Naive thymus-derived CD4-positive, alpha-beta T cell (primary cell): ENCODE measurements at regions of chr13 and their contacts with region 1.

Region 1: GRCh38 chr13:24160454-24161009 is at the start of gene SPATA13:
- DNase-seq: peak; percentile 84 to 95 (median 93)
- ATAC-seq: peak; percentile 99
- H3K4me3 ChIP-seq: peak within 1 kb of the TSS; percentile 80
- H3K4me3 Mint-ChIP-seq: peak within 1 kb of the TSS; percentile 79 to 94 (median 88)
- H3K27ac ChIP-seq: peak within 1 kb of the TSS; percentile 62
- H3K27ac Mint-ChIP-seq: peak within 1 kb of the TSS in 8 of 9 donors; percentile 24 to 82 (median 65)
- H3K4me1 ChIP-seq: peaks cover 3 to 9% of the 10 kb centered on the region in 2 donors
- H3K4me1 Mint-ChIP-seq: peaks cover 9 to 19% (median 13%) of the 10 kb centered on the region in 7 donors
- H3K27me3 ChIP-seq: no peaks in the 10 kb centered on the region
- H3K27me3 Mint-ChIP-seq: peaks cover 5 to 23% (median 9%) of the 10 kb centered on the region in 5 donors
- total RNA-seq, gene SPATA13: 62.2 to 104 (median 101) TPM

Region 2: DNA sequence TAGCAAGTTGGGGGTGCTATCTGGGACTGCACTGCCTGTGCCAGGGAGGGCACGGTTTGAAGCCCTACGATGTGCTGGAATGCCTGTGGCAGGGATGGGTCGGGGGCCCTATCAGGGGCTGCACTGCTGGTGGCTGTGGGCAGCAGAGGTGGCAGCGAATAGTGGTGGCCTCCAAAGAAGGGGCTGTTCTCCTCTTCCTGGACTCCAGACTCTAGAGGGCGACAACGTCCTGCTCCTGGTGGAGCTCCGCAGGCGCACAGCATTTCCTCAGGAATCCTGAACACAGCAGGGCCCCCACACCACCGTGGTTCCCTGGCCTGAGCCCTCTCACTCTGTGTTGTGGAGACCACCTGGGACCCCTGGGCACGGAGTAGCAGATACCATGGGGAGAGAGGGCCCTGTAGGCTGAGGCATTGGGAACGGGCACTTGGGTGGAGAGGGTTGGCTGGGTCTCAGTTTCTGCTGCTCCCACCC is 444.7 kb before region 1 on chr13:
- CTCF ChIA-PET with region 1: no interaction called
- POLR2A ChIA-PET with region 1: no interaction called
- intact Hi-C with region 1: no loop called
- DNase-seq: no peak
- ATAC-seq: no peak
- H3K4me3 ChIP-seq: no peak overlapping the region
- H3K4me3 Mint-ChIP-seq: no peak overlapping the region
- H3K27ac ChIP-seq: no peak overlapping the region
- H3K27ac Mint-ChIP-seq: no peak overlapping the region
- H3K4me1 ChIP-seq: no peaks in the 10 kb centered on the region
- H3K4me1 Mint-ChIP-seq: peaks cover 14 to 38% (median 32%) of the 10 kb centered on the region in 7 donors
- H3K27me3 ChIP-seq: no peaks in the 10 kb centered on the region
- H3K27me3 Mint-ChIP-seq: peaks cover 0 to 18% (median 11%) of the 10 kb centered on the region in 5 donors

Region 3: DNA sequence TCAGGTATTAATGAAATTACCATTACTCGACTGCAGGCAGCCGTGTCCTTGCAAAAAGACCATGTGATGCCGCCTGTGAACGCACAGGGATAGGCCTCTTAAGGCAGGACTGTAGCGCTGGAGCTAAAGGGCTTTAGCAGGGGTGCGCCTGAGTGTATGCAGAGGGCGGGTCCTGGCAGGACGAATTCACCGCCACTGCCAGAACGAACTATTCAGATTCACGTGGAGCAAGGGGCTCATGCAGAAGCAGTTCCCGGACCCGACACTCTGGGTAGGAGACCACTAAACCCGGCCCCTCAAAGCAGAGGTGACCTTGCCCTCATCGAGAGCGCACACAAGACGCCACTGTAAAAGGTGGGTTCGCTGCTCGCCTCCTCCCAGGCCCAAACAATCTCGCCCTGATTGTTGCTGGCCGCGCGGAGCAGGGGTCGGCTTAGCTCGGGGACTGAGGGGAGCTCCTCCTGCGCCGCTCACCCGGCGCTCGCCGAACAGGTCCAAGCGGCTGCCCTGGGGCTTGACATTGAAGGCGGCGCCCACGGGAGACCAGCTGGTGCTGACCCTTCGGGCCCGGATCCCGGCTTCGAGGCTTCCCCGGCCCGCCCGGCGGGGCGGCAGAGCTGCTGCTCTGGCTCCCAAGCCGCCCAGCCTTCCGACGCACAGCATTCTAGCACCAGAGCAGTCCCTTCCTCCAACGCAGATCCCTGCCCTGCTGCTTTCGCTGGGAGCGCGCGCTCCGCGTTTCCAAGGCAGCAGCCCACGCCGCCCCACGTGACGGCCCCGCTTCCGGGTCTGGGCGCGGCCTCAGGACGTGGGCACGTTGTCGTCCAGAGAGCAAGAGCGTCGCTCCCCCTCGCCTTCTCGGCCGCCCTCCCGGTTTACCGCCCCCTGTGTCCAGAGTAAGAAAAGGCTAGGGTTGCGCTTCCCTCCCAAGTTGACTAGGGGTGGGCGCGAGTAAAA is 271.6 kb before region 1 on chr13 and contains the start of gene MIPEP:
- CTCF ChIA-PET with region 1: no interaction called
- POLR2A ChIA-PET with region 1: no interaction called
- intact Hi-C with region 1: loop called (anchors 1 to 2 kb)
- DNase-seq: peak; percentile 68 to 94 (median 83)
- ATAC-seq: peak; percentile 98
- H3K4me3 ChIP-seq: peak within 1 kb of the TSS; percentile 88
- H3K4me3 Mint-ChIP-seq: peak within 1 kb of the TSS; percentile 85 to 96 (median 92)
- H3K27ac ChIP-seq: peak within 1 kb of the TSS; percentile 70
- H3K27ac Mint-ChIP-seq: peak within 1 kb of the TSS; percentile 72 to 92 (median 84)
- H3K4me1 ChIP-seq: peaks cover 0 to 5% of the 10 kb centered on the region in 2 donors
- H3K4me1 Mint-ChIP-seq: peaks cover 12 to 31% (median 25%) of the 10 kb centered on the region in 7 donors
- H3K27me3 ChIP-seq: no peaks in the 10 kb centered on the region
- H3K27me3 Mint-ChIP-seq: no peaks in the 10 kb centered on the region
- total RNA-seq, gene MIPEP: 8.0 to 10.5 (median 9.2) TPM

Region 4: GRCh38 chr13:23902975-23903905 is 257.3 kb before region 1 on chr13:
- CTCF ChIA-PET with region 1: no interaction called
- POLR2A ChIA-PET with region 1: no interaction called
- intact Hi-C with region 1: no loop called
- DNase-seq: no peak
- ATAC-seq: peak; percentile 18
- H3K4me3 ChIP-seq: no peak overlapping the region
- H3K4me3 Mint-ChIP-seq: peak overlapping the region in 7 of 10 donors; percentile 8 to 56 (median 36)
- H3K27ac ChIP-seq: no peak overlapping the region
- H3K27ac Mint-ChIP-seq: no peak overlapping the region
- H3K4me1 ChIP-seq: no peaks in the 10 kb centered on the region
- H3K4me1 Mint-ChIP-seq: peaks cover 0 to 10% (median 3%) of the 10 kb centered on the region in 7 donors
- H3K27me3 ChIP-seq: peaks cover 0 to 10% of the 10 kb centered on the region in 2 donors
- H3K27me3 Mint-ChIP-seq: peaks cover 41 to 59% (median 42%) of the 10 kb centered on the region in 5 donors

Region 5: DNA sequence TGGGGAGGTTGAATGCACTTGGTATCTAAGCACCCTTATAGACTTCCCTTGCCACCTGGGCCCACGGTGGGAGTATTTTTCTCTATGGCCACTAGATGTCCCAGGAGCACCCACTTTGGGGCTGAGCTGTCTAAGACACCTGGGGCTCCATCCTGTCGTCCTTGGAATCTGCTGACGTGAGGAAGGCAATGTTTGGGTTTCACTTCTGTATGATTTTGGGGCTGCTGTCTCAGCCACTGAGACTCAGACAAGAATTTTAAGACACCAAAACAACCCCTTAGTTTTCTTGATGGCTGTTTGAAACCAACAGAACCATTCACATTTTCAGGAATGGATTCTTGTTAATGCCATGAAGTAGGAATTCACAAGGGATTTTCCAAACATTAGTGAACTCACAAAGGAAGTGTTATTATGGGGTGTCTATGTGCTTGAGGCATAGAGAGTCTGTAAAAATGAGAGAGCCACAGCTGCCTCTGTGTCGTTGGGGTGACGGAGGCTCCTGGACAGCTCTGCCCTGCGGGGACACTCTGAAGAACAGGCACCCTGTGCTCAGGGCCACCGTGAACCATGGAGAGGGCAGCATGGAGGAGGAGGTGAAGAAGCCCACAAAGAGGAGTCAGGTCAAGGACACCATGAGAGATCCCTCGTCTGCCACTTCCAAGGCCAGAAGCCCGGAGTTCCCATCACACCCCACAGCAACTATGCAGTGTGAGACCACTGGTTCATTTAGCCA is 106.8 kb before region 1 on chr13:
- CTCF ChIA-PET with region 1: no interaction called
- POLR2A ChIA-PET with region 1: no interaction called
- intact Hi-C with region 1: loop called (anchors 1 to 2 kb)
- DNase-seq: peak; percentile 24 to 70 (median 61)
- ATAC-seq: peak; percentile 91
- H3K4me3 ChIP-seq: no peak overlapping the region
- H3K4me3 Mint-ChIP-seq: no peak overlapping the region
- H3K27ac ChIP-seq: no peak overlapping the region
- H3K27ac Mint-ChIP-seq: peak overlapping the region in 5 of 9 donors; percentile 21 to 68 (median 24)
- H3K4me1 ChIP-seq: no peaks in the 10 kb centered on the region
- H3K4me1 Mint-ChIP-seq: peaks cover 0 to 12% (median 9%) of the 10 kb centered on the region in 7 donors
- H3K27me3 ChIP-seq: no peaks in the 10 kb centered on the region
- H3K27me3 Mint-ChIP-seq: peaks cover 3 to 22% (median 7%) of the 10 kb centered on the region in 5 donors

Region 6: GRCh38 chr13:24203811-24204210 is 43.3 kb after region 1 on chr13:
- CTCF ChIA-PET with region 1: interaction called, 3 read pairs
- POLR2A ChIA-PET with region 1: no interaction called
- intact Hi-C with region 1: loop called in 1 of 2 experiments (anchors 1 kb)
- DNase-seq: peak in 6 of 9 donors; percentile 12 to 34 (median 25)
- ATAC-seq: peak; percentile 87
- H3K4me3 ChIP-seq: no peak overlapping the region
- H3K4me3 Mint-ChIP-seq: peak overlapping the region; percentile 16 to 77 (median 64)
- H3K27ac ChIP-seq: no peak overlapping the region
- H3K27ac Mint-ChIP-seq: peak overlapping the region in 6 of 9 donors; percentile 14 to 69 (median 34)
- H3K4me1 ChIP-seq: peaks cover 3 to 7% of the 10 kb centered on the region in 2 donors
- H3K4me1 Mint-ChIP-seq: peaks cover 12 to 35% (median 23%) of the 10 kb centered on the region in 7 donors
- H3K27me3 ChIP-seq: no peaks in the 10 kb centered on the region
- H3K27me3 Mint-ChIP-seq: peaks cover 0 to 15% (median 9%) of the 10 kb centered on the region in 5 donors

Region 7: GRCh38 chr13:24254146-24254841 is 93.8 kb after region 1 on chr13:
- CTCF ChIA-PET with region 1: no interaction called
- POLR2A ChIA-PET with region 1: no interaction called
- intact Hi-C with region 1: loop called (anchors 1 kb)
- DNase-seq: peak in 7 of 9 donors; percentile 59 to 80 (median 68)
- ATAC-seq: peak; percentile 76
- H3K4me3 ChIP-seq: peak overlapping the region; percentile 82
- H3K4me3 Mint-ChIP-seq: peak overlapping the region; percentile 86 to 96 (median 92)
- H3K27ac ChIP-seq: peak overlapping the region; percentile 90
- H3K27ac Mint-ChIP-seq: peak overlapping the region; percentile 86 to 99 (median 95)
- H3K4me1 ChIP-seq: peaks cover 58 to 75% of the 10 kb centered on the region in 2 donors
- H3K4me1 Mint-ChIP-seq: peaks cover 44 to 96% (median 91%) of the 10 kb centered on the region in 7 donors
- H3K27me3 ChIP-seq: no peaks in the 10 kb centered on the region
- H3K27me3 Mint-ChIP-seq: no peaks in the 10 kb centered on the region

Region 8: GRCh38 chr13:24922745-24923591 is 762.4 kb after region 1 on chr13:
- CTCF ChIA-PET with region 1: no interaction called
- POLR2A ChIA-PET with region 1: no interaction called
- intact Hi-C with region 1: loop called (anchors 1 to 10 kb)
- DNase-seq: peak; percentile 79 to 93 (median 87)
- ATAC-seq: peak; percentile 100
- H3K4me3 ChIP-seq: peak overlapping the region; percentile 78
- H3K4me3 Mint-ChIP-seq: peak overlapping the region; percentile 89 to 100 (median 98)
- H3K27ac ChIP-seq: peak overlapping the region; percentile 71
- H3K27ac Mint-ChIP-seq: peak overlapping the region; percentile 73 to 95 (median 91)
- H3K4me1 ChIP-seq: no peaks in the 10 kb centered on the region
- H3K4me1 Mint-ChIP-seq: peaks cover 0 to 22% (median 14%) of the 10 kb centered on the region in 7 donors
- H3K27me3 ChIP-seq: no peaks in the 10 kb centered on the region
- H3K27me3 Mint-ChIP-seq: peaks cover 0 to 12% (median 0%) of the 10 kb centered on the region in 5 donors